Transverse colon (tissue), 4 donors: ENCODE measurements at regions of chr3 and their contacts with region 1.

Region 1: DNA sequence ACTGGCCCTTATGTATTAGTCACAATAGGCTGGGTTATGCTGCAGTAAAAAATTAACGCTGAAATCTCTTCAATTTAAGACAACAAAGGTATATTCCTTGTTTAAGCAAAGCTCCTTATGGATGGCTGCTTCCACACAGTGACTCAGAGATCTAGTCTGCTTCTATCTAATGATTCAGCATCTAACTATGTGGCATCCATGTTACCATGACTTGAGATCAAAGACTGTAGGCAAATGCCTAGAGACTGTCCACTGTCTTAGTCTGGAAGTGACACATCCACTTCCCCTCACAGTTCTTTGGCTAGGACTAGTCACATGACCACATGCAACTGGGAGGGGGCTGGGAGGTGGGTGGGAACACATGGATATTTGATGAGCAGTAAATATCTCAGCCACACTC is 61.3 kb upstream of the PSMD6 start:
- DNase-seq: no peak
- H3K4me3 ChIP-seq: no peak overlapping the region
- H3K27ac ChIP-seq: no peak overlapping the region
- H3K4me1 ChIP-seq: peaks cover 0 to 7% (median 0%) of the 10 kb centered on the region in 4 donors
- H3K27me3 ChIP-seq: no peaks in the 10 kb centered on the region
- CTCF ChIP-seq: no peak
- EP300 ChIP-seq: no peak
- POLR2A ChIP-seq: no peak

Region 2: GRCh38 chr3:64174328-64174727 is 89.7 kb after region 1 on chr3:
- in situ Hi-C with region 1: no loop called
- intact Hi-C with region 1: loop called (anchors 5 kb)
- DNase-seq: no peak
- H3K4me3 ChIP-seq: no peak overlapping the region
- H3K27ac ChIP-seq: no peak overlapping the region
- H3K4me1 ChIP-seq: peaks cover 0 to 9% (median 2%) of the 10 kb centered on the region in 4 donors
- H3K27me3 ChIP-seq: no peaks in the 10 kb centered on the region
- CTCF ChIP-seq: no peak
- EP300 ChIP-seq: no peak
- POLR2A ChIP-seq: no peak

Region 3: DNA sequence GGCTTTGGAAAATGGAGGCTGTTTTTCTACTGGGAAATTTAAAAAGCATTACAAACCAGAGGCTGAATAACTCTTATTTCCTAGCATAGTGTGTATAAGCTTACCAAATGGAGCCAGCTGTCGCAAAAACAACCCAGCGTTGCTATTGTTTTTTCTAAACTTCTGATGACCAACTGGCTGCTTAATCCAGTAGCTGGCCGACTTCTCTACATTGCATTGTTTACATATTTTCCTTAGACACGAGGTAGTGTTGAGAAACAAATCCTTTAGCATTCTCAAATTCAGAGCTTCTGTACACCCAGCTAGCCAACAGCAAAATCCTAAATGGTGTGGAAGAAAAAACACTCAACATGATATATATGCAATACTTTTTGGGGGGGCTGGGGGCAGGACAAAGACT is 764.2 kb after region 1 on chr3:
- in situ Hi-C with region 1: no loop called
- intact Hi-C with region 1: no loop called
- DNase-seq: peak; percentile 9
- H3K4me3 ChIP-seq: no peak overlapping the region
- H3K27ac ChIP-seq: peak overlapping the region in 2 of 4 donors; percentile 12 to 39
- H3K4me1 ChIP-seq: no peaks in the 10 kb centered on the region
- H3K27me3 ChIP-seq: no peaks in the 10 kb centered on the region
- CTCF ChIP-seq: no peak
- EP300 ChIP-seq: no peak
- POLR2A ChIP-seq: no peak